ENCODE measurements at regions of chrX and their contacts with region 1.

Region 1: GRCh38 chrX:101390664-101391525 is at the start of gene RPL36A:
- DNase-seq: peak; percentile 89
- ATAC-seq: peak; percentile 82
- H3K4me3 ChIP-seq: peak within 1 kb of the TSS; percentile 47 to 72 (median 58)
- H3K4me3 Mint-ChIP-seq: peak within 1 kb of the TSS; percentile 95
- H3K27ac ChIP-seq: peak within 1 kb of the TSS; percentile 62 to 85
- H3K27ac Mint-ChIP-seq: peak within 1 kb of the TSS; percentile 95
- H3K4me1 ChIP-seq: peaks cover 22 to 26% of the 10 kb centered on the region in 2 donors
- H3K4me1 Mint-ChIP-seq: peaks cover 41% of the 10 kb centered on the region
- H3K27me3 ChIP-seq: no peaks in the 10 kb centered on the region
- H3K27me3 Mint-ChIP-seq: no peaks in the 10 kb centered on the region
- CTCF ChIP-seq: peak; percentile 68
- total RNA-seq, gene RPL36A: 155 and 156 TPM in 2 replicates

Region 2: DNA sequence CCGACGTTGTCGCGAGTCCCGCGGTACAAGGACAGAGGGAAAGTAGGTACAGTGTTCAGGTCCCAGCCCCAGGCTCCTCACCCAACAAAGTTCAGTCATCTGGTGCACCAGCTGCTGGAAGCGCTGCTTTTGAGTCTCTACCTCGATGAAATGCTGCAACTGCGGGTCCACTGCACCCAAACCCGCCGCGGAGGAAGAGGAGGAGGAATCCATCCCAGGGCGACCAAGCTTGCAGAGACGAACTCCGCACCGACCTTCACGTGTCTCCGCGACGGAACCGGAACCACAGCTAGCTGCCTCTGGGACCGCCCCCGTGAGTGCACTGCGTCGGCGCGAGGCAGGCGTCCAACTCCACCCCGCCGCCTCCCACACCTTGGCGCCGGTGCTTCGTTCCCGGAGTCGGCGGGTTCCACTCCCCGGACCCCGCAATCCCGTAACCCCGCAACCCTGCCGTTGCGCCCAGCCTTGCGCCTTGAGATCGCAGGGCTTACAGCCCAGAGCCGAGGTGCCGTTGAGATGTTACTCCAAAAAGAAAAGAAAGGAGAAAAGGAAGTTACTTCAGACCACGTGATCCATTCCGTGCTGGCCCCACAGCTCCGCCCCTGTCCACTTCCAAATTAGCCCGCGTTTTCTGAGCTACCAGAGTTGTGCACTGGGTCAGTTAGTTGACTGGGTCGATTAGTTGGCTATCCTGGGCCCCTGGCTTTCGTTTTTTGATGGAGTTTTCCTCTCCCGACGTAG is 42.3 kb before region 1 on chrX and contains the start of gene TIMM8A:
- CTCF ChIA-PET with region 1: interaction called, 12 read pairs
- POLR2A ChIA-PET with region 1: interaction called, 5 read pairs
- intact Hi-C with region 1: loop called (anchors 1 kb)
- DNase-seq: peak; percentile 82
- ATAC-seq: peak; percentile 99
- H3K4me3 ChIP-seq: peak within 1 kb of the TSS; percentile 64 to 81 (median 74)
- H3K4me3 Mint-ChIP-seq: peak within 1 kb of the TSS; percentile 92
- H3K27ac ChIP-seq: peak within 1 kb of the TSS; percentile 55 to 81
- H3K27ac Mint-ChIP-seq: peak within 1 kb of the TSS; percentile 86
- H3K4me1 ChIP-seq: peaks cover 3 to 15% of the 10 kb centered on the region in 2 donors
- H3K4me1 Mint-ChIP-seq: peaks cover 12% of the 10 kb centered on the region
- H3K27me3 ChIP-seq: no peaks in the 10 kb centered on the region
- H3K27me3 Mint-ChIP-seq: no peaks in the 10 kb centered on the region
- CTCF ChIP-seq: no peak
- total RNA-seq, gene TIMM8A: 12.0 and 13.4 TPM in 2 replicates

Region 3: GRCh38 chrX:101370888-101371504 is 19.9 kb before region 1 on chrX:
- CTCF ChIA-PET with region 1: interaction called, 5 read pairs
- POLR2A ChIA-PET with region 1: no interaction called
- intact Hi-C with region 1: loop called (anchors 2 kb)
- DNase-seq: peak; percentile 67
- ATAC-seq: peak; percentile 82
- H3K4me3 ChIP-seq: peak overlapping the region in 1 of 5 experiments; percentile 38
- H3K4me3 Mint-ChIP-seq: peak overlapping the region; percentile 65
- H3K27ac ChIP-seq: peak overlapping the region; percentile 54 to 85
- H3K27ac Mint-ChIP-seq: peak overlapping the region; percentile 86
- H3K4me1 ChIP-seq: peaks cover 47 to 52% of the 10 kb centered on the region in 2 donors
- H3K4me1 Mint-ChIP-seq: peaks cover 48% of the 10 kb centered on the region
- H3K27me3 ChIP-seq: no peaks in the 10 kb centered on the region
- H3K27me3 Mint-ChIP-seq: no peaks in the 10 kb centered on the region
- CTCF ChIP-seq: no peak

Region 4: GRCh38 chrX:101377547-101377946 is 13.3 kb before region 1 on chrX:
- CTCF ChIA-PET with region 1: interaction called, 16 read pairs
- POLR2A ChIA-PET with region 1: interaction called, 7 read pairs
- intact Hi-C with region 1: no loop called
- DNase-seq: peak; percentile 60
- ATAC-seq: peak; percentile 91
- H3K4me3 ChIP-seq: no peak overlapping the region
- H3K4me3 Mint-ChIP-seq: peak overlapping the region; percentile 69
- H3K27ac ChIP-seq: peak overlapping the region; percentile 69 to 78
- H3K27ac Mint-ChIP-seq: peak overlapping the region; percentile 87
- H3K4me1 ChIP-seq: peaks cover 39 to 48% of the 10 kb centered on the region in 2 donors
- H3K4me1 Mint-ChIP-seq: peaks cover 42% of the 10 kb centered on the region
- H3K27me3 ChIP-seq: no peaks in the 10 kb centered on the region
- H3K27me3 Mint-ChIP-seq: no peaks in the 10 kb centered on the region
- CTCF ChIP-seq: no peak

Region 5: DNA sequence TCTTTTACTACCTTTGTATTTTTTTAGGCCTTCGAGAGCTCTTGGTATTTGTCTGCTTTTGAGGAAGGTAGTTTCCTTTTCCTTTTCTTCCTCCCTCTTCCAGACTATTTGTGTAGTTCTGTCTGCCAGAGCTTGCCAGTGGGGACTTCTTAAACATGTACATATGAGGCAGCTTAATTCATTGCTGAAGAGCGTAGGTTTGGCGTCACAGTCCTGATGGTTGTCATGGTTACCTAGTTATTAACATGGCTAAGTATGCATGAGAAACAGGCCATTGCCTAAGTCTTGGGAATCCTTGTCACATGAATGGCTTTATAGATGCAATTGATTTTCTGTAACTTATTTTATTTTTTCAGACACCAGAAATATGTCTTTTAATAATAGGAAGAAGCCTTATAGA is 317.3 kb after region 1 on chrX:
- CTCF ChIA-PET with region 1: no interaction called
- POLR2A ChIA-PET with region 1: no interaction called
- intact Hi-C with region 1: no loop called
- DNase-seq: no peak
- ATAC-seq: no peak
- H3K4me3 ChIP-seq: no peak overlapping the region
- H3K4me3 Mint-ChIP-seq: no peak overlapping the region
- H3K27ac ChIP-seq: no peak overlapping the region
- H3K27ac Mint-ChIP-seq: no peak overlapping the region
- H3K4me1 ChIP-seq: no peaks in the 10 kb centered on the region
- H3K4me1 Mint-ChIP-seq: no peaks in the 10 kb centered on the region
- H3K27me3 ChIP-seq: no peaks in the 10 kb centered on the region
- H3K27me3 Mint-ChIP-seq: no peaks in the 10 kb centered on the region
- CTCF ChIP-seq: no peak

Region 6: DNA sequence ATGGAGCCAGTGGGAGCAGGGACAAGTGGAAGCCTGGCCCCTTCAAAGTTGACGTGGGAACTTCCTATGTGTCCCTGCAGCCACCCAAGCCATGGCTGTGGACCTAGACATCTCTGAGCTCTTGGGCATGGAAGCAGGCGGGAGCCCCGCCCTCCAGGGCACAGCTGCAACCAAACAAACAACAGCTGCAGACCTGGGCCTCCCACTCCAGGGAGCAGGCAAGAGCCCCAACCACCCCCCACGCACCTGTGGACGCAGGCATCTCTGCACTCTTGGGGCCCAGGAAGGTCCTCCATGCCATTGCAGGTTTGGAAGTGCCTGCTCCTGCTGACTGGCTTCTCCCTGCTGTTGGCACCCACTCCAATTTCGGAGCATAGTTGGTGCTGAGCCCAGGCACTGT is 422.3 kb after region 1 on chrX:
- CTCF ChIA-PET with region 1: no interaction called
- POLR2A ChIA-PET with region 1: no interaction called
- intact Hi-C with region 1: no loop called
- DNase-seq: no peak
- ATAC-seq: no peak
- H3K4me3 ChIP-seq: no peak overlapping the region
- H3K4me3 Mint-ChIP-seq: no peak overlapping the region
- H3K27ac ChIP-seq: no peak overlapping the region
- H3K27ac Mint-ChIP-seq: no peak overlapping the region
- H3K4me1 ChIP-seq: no peaks in the 10 kb centered on the region
- H3K4me1 Mint-ChIP-seq: no peaks in the 10 kb centered on the region
- H3K27me3 ChIP-seq: peaks cover 0 to 2% (median 0%) of the 10 kb centered on the region in 4 experiments
- H3K27me3 Mint-ChIP-seq: no peaks in the 10 kb centered on the region
- CTCF ChIP-seq: no peak